HEK293T (cell line): ENCODE measurements at regions of chr6 and their contacts with region 1.

Region 1: DNA sequence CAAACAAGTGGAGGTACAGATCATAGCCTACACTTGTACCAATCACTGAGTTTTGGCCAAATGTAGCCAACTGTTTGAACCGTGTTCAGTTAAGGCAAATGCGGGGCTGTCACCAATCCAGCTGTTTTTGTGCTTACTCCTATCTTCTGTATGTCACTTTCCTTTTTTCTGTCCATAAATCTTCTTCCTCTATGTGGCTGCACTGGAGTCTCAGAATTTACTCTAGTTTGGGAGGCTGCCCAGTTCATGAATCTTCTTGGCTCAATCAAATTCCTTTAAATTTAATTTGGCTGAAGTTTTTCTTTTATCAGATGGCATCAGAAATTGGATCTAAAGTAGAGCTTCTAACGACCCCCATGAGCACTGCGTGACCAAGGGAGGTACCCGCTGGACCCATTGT is 11.7 kb upstream of the STX7 start:
- DNase-seq: no peak

Region 2: GRCh38 chr6:132512638-132513632 is 11.7 kb before region 1 on chr6 and contains the start of gene STX7:
- CTCF ChIA-PET with region 1: no interaction called
- POLR2A ChIA-PET with region 1: interaction called, 11 read pairs
- DNase-seq: peak; percentile 96